ENCODE measurements at regions of chr12 and their contacts with region 1.

Region 1: DNA sequence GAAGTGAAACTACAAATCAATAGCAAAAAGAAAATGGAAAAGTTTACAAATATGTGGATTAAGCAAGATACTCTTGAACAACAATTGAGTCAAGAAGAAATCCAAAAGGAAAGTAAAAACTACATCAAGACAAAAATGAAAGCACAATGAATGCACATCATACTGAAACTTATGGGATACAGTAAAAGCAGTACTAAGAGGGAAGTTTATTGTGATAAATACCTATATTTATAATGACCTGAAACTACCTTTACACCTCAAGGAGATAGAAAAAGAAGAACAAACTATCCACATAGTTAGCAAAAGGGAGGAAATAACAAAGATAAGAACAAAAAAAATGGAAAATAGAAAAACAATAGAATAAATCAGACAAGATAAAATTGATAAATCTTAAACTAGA is 375.0 kb downstream of the TRHDE start:
- DNase-seq: no peak
- ATAC-seq: no peak
- H3K4me3 Mint-ChIP-seq: no peak overlapping the region
- H3K27ac Mint-ChIP-seq: no peak overlapping the region
- H3K4me1 Mint-ChIP-seq: no peaks in the 10 kb centered on the region
- H3K27me3 Mint-ChIP-seq: no peaks in the 10 kb centered on the region
- CTCF ChIP-seq: no peak

Region 2: DNA sequence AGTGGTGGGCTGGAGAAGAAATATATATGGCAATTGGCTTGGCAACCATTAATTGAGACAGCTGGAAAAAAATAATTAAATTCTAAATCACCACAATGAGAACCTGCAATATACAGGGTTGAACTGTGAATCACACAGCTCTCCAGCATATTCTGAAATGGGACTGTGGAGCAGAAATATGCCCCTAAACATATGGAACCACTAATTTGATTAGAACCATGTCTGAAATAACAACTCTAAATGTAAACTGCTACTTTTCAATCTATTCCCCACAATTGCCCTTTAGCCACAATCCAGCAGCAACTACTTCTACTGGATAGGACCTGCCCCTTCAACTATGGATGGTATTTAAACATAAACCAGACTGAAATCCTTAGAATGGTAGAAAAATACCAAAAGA is 44.6 kb before region 1 on chr12:
- CTCF ChIA-PET with region 1: no interaction called
- POLR2A ChIA-PET with region 1: no interaction called
- intact Hi-C with region 1: loop called (anchors 5 kb)
- DNase-seq: no peak
- ATAC-seq: no peak
- H3K4me3 Mint-ChIP-seq: no peak overlapping the region
- H3K27ac Mint-ChIP-seq: no peak overlapping the region
- H3K4me1 Mint-ChIP-seq: no peaks in the 10 kb centered on the region
- H3K27me3 Mint-ChIP-seq: no peaks in the 10 kb centered on the region
- CTCF ChIP-seq: no peak

Region 3: GRCh38 chr12:74259199-74259598 is 1612.1 kb after region 1 on chr12:
- CTCF ChIA-PET with region 1: no interaction called
- POLR2A ChIA-PET with region 1: no interaction called
- intact Hi-C with region 1: no loop called
- DNase-seq: no peak
- ATAC-seq: no peak
- H3K4me3 Mint-ChIP-seq: no peak overlapping the region
- H3K27ac Mint-ChIP-seq: no peak overlapping the region
- H3K4me1 Mint-ChIP-seq: no peaks in the 10 kb centered on the region
- H3K27me3 Mint-ChIP-seq: no peaks in the 10 kb centered on the region
- CTCF ChIP-seq: no peak

Measured in activated B cell treated with CpG ODN at 0.5 μM for 24 hours (primary cell).